A549 (cell line): ENCODE measurements at regions of chr19 and their contacts with region 1.

Region 1: GRCh38 chr19:43704002-43704705 is 11.7 kb upstream of the IRGC start:
- DNase-seq: peak in 1 of 2 experiments; percentile 66
- ATAC-seq: no peak
- H3K4me3 ChIP-seq: no peak overlapping the region
- H3K27ac ChIP-seq: peak overlapping the region; percentile 76 to 91
- H3K4me1 ChIP-seq: peaks cover 49% of the 10 kb centered on the region
- CTCF ChIP-seq: no peak
- EP300 ChIP-seq: no peak
- POLR2A ChIP-seq: no peak
- RAD21 ChIP-seq: no peak

Region 2: DNA sequence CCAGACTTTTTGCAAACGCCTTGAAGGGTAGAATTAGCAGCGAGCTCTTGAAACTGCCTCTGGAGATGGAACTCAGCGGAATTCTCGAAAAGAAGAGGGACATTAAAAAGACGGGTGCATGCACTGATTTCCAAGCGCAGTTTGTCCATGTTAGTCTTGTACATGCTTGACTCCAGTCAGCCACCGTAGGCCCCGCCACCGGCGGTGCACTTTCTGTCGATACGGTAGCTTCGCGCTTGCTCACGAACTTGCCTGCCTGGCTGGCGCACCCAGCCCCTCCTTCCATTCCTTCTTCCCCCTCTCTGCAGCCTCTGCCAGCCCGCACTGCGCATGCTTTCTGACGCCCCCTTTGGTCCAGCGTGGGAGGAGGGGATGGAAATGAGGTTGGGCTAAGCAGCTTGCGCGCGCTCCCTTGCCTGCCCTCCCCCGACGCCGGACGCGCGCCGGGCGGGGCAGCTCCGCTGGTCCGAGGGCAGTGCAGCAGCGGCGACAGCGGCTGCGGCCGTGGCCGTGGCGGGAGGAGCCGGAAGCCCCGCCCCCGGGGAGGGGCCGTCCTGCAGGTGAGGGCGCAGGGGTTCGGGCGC is 171.1 kb before region 1 on chr19 and contains the start of gene ZNF575:
- CTCF ChIA-PET with region 1: no interaction called
- POLR2A ChIA-PET with region 1: no interaction called
- DNase-seq: peak; percentile 95 to 99
- ATAC-seq: peak; percentile 70 to 83
- H3K4me3 ChIP-seq: peak within 1 kb of the TSS; percentile 57
- H3K27ac ChIP-seq: peak within 1 kb of the TSS; percentile 90 to 93
- H3K4me1 ChIP-seq: peaks cover 14% of the 10 kb centered on the region
- CTCF ChIP-seq: no peak
- EP300 ChIP-seq: no peak
- POLR2A ChIP-seq: peak; percentile 79
- RAD21 ChIP-seq: no peak
- polyA plus RNA-seq, gene ZNF575: 0.09 and 0.38 TPM in 2 replicates

Region 3: GRCh38 chr19:43731846-43732245 is 27.7 kb after region 1 on chr19:
- CTCF ChIA-PET with region 1: interaction called, 10 read pairs
- POLR2A ChIA-PET with region 1: no interaction called
- DNase-seq: no peak
- ATAC-seq: no peak
- H3K4me3 ChIP-seq: no peak overlapping the region
- H3K27ac ChIP-seq: no peak overlapping the region
- H3K4me1 ChIP-seq: no peaks in the 10 kb centered on the region
- CTCF ChIP-seq: no peak
- EP300 ChIP-seq: no peak
- POLR2A ChIP-seq: no peak
- RAD21 ChIP-seq: no peak